ENCODE measurements at regions of chr17 and their contacts with region 1.

Region 1: DNA sequence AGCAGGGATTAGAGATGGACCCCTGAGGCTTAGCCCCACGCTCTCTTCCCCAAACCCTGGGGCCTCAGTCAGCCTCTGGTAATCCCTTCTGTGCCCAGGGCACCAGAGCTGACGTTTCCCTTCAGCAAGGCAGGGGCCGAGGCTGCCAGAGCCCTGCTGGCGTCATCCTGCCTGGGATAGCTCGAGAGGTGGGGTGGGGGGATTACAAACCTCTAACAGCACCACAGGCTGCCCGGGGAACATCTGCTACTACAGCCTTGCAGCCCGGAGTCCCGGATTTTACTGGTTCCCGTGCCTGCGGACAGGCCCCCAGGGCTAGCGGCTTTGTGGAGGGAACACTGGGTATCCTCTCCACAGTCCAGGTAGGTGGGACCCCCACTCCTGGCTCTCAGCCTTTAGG is at the start of gene AANAT:
- DNase-seq: no peak
- H3K4me3 Mint-ChIP-seq: no peak within 1 kb of the TSS
- H3K27ac Mint-ChIP-seq: no peak within 1 kb of the TSS
- H3K4me1 Mint-ChIP-seq: peaks cover 2% of the 10 kb centered on the region
- H3K27me3 Mint-ChIP-seq: no peaks in the 10 kb centered on the region
- total RNA-seq, gene AANAT: not detected

Region 2: GRCh38 chr17:76408052-76408849 is 59.1 kb before region 1 on chr17:
- CTCF ChIA-PET with region 1: interaction called, 6 read pairs
- intact Hi-C with region 1: loop called (anchors 1 kb)
- DNase-seq: peak; percentile 86
- H3K4me3 Mint-ChIP-seq: no peak overlapping the region
- H3K27ac Mint-ChIP-seq: no peak overlapping the region
- H3K4me1 Mint-ChIP-seq: peaks cover 8% of the 10 kb centered on the region
- H3K27me3 Mint-ChIP-seq: no peaks in the 10 kb centered on the region

Region 3: DNA sequence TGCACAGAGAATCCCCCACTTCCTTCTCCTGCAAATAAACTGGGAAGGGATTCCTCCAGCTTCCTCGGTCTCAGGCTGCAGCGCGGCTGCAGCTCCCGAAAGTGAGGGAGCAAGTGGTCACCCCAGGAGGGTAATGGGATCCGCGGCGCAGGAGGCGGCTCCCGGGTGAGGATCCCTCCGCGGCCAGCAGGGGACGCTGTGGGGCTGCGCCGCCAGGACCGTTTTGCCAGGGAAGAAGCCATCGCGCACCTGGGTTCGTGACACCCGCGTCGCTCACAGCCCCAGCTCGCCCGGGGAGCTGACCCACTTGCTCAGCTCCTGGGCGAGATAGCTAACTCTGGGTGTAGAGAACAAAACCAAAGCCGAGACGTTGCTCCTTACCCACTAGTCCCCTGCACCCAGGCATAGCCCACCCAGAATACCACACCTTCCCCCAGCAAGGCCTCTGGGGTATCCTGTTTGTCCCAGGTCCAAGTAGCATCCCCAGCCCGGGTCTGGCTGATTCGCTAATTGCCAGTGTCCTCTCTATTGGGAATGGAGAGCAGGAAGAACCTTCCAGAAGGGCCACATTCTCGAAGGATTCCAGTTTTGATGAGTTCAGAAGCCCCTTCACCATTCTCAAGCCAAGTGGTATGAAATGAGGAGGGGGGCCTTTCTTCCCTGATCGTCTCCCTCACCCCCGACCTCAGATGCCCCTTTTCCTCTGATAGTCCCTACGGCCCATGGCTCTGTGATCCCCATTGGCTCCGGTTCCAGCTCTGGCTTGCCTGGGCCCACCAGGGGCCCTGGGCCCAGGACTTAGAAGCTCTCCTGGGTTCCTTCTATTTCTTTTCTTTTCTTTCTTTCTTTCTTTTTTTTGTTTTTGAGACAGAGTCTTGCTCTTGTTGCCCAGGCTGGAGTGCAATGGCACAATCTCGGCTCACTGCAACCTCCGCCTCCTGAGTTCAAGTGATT is 56.0 kb after region 1 on chr17:
- CTCF ChIA-PET with region 1: no interaction called
- intact Hi-C with region 1: no loop called
- DNase-seq: peak; percentile 84
- H3K4me3 Mint-ChIP-seq: peak overlapping the region; percentile 19
- H3K27ac Mint-ChIP-seq: no peak overlapping the region
- H3K4me1 Mint-ChIP-seq: peaks cover 17% of the 10 kb centered on the region
- H3K27me3 Mint-ChIP-seq: no peaks in the 10 kb centered on the region

Region 4: GRCh38 chr17:76547184-76547641 is 79.8 kb after region 1 on chr17:
- CTCF ChIA-PET with region 1: no interaction called
- intact Hi-C with region 1: loop called (anchors 1 kb)
- DNase-seq: peak; percentile 66
- H3K4me3 Mint-ChIP-seq: no peak overlapping the region
- H3K27ac Mint-ChIP-seq: no peak overlapping the region
- H3K4me1 Mint-ChIP-seq: peaks cover 5% of the 10 kb centered on the region
- H3K27me3 Mint-ChIP-seq: peaks cover 11% of the 10 kb centered on the region